ENCODE measurements at regions of chr14 and their contacts with region 1.

Region 1: DNA sequence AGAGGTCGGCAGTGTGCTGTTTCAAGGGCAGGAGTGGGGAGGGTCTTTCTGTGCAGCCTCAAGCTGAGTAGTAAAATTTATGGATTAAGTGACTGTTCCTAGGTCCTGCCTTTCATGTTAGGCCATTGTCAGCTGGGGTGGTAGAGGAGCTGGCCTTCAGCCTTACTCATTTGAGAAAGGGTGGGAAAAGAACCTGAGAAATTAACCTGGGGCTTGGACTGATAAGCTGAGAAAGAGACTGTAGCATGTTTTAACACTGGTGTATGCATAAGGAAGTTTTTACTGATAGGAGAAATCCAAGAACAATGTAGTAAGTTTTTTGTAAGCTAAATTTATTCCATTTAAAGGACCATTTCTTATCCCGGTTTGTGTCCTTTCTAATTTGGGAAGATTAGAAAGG is 20.7 kb downstream of the IFT43 start:
- DNase-seq: no peak
- ATAC-seq: no peak
- H3K4me3 ChIP-seq: no peak overlapping the region
- H3K27ac ChIP-seq: no peak overlapping the region
- H3K4me1 ChIP-seq: no peaks in the 10 kb centered on the region
- H3K27me3 ChIP-seq: no peaks in the 10 kb centered on the region
- CTCF ChIP-seq: no peak
- EP300 ChIP-seq: no peak
- POLR2A ChIP-seq: no peak
- RAD21 ChIP-seq: no peak

Region 2: DNA sequence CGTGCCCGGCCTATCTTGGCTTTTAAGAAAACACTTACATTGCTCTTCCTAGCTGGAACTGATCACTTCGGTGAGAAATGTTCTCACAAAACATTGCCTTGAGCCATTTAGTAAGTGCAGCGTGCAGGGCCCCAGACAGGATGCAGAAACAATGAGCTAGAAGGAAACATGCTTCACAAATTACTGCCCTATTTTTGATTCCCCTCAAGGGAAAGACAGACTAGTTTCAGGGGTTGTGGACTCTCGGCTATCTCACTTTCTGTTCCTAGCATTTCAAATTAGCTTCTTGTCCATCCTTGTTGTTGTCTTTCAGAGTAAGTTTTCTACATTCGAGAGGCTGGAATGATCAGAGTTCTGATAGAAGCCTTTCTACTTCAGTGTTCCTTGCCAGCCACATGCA is 46.0 kb before region 1 on chr14:
- CTCF ChIA-PET with region 1: no interaction called
- POLR2A ChIA-PET with region 1: no interaction called
- RAD21 ChIA-PET with region 1: no interaction called
- SMC1A ChIA-PET with region 1: no interaction called
- in situ Hi-C with region 1: no loop called
- intact Hi-C with region 1: no loop called
- DNase-seq: peak; percentile 78
- ATAC-seq: peak; percentile 97
- H3K4me3 ChIP-seq: no peak overlapping the region
- H3K27ac ChIP-seq: peak overlapping the region; percentile 38
- H3K4me1 ChIP-seq: peaks cover 19% of the 10 kb centered on the region
- H3K27me3 ChIP-seq: no peaks in the 10 kb centered on the region
- CTCF ChIP-seq: no peak
- EP300 ChIP-seq: 0 out of 4 replicates have a peak, but pooled peaks of 1 of the 2 experiments have one; percentile 18
- POLR2A ChIP-seq: no peak
- RAD21 ChIP-seq: no peak

Region 3: GRCh38 chr14:75970989-75971388 is 35.3 kb before region 1 on chr14:
- CTCF ChIA-PET with region 1: no interaction called
- POLR2A ChIA-PET with region 1: no interaction called
- RAD21 ChIA-PET with region 1: no interaction called
- SMC1A ChIA-PET with region 1: no interaction called
- in situ Hi-C with region 1: no loop called
- intact Hi-C with region 1: no loop called
- DNase-seq: no peak
- ATAC-seq: no peak
- H3K4me3 ChIP-seq: no peak overlapping the region
- H3K27ac ChIP-seq: no peak overlapping the region
- H3K4me1 ChIP-seq: peaks cover 6% of the 10 kb centered on the region; the same call in 1 of the 2 replicates
- H3K27me3 ChIP-seq: no peaks in the 10 kb centered on the region
- CTCF ChIP-seq: no peak
- EP300 ChIP-seq: no peak
- POLR2A ChIP-seq: no peak
- RAD21 ChIP-seq: no peak

Region 4: GRCh38 chr14:75995372-75996041 is 10.7 kb before region 1 on chr14:
- CTCF ChIA-PET with region 1: interaction called, 3 read pairs
- POLR2A ChIA-PET with region 1: no interaction called
- RAD21 ChIA-PET with region 1: interaction called, 3 read pairs
- SMC1A ChIA-PET with region 1: interaction called, 15 read pairs
- in situ Hi-C with region 1: no loop called
- intact Hi-C with region 1: no loop called
- DNase-seq: no peak
- ATAC-seq: no peak
- H3K4me3 ChIP-seq: no peak overlapping the region
- H3K27ac ChIP-seq: no peak overlapping the region
- H3K4me1 ChIP-seq: peaks cover 11% of the 10 kb centered on the region
- H3K27me3 ChIP-seq: no peaks in the 10 kb centered on the region
- CTCF ChIP-seq: no peak
- EP300 ChIP-seq: no peak
- POLR2A ChIP-seq: no peak
- RAD21 ChIP-seq: no peak